Panc1 (cell line): ENCODE measurements at regions of chr6 and their contacts with region 1.

Region 1: DNA sequence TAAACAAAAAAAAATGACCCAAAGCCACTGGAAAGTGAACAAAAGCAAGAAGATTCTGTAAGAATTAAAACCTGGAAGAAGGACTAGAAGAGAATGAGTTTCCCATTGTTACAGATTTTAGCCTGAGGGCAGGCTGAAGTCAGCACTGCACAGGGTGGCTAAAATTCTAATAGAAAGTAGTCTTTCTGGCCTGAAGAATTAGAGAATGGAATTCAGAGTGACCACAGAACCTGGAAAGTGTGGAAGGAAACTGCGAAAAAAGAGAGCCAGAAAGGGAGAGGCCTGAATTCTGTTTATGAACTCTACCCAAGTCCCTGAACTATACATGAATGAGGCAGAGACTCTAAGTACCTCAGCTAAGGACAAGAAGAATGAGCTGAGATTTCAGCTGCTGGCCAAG is 38.9 kb upstream of the FILIP1 start:
- DNase-seq: no peak
- ATAC-seq: no peak
- H3K4me3 ChIP-seq: no peak overlapping the region
- H3K27ac ChIP-seq: no peak overlapping the region
- H3K4me1 ChIP-seq: 0 out of 2 replicates have a peak, but pooled peaks cover 2% of the 10 kb centered on the region
- H3K27me3 ChIP-seq: no peaks in the 10 kb centered on the region; the same call in 1 of the 2 replicates
- CTCF ChIP-seq: no peak

Region 2: DNA sequence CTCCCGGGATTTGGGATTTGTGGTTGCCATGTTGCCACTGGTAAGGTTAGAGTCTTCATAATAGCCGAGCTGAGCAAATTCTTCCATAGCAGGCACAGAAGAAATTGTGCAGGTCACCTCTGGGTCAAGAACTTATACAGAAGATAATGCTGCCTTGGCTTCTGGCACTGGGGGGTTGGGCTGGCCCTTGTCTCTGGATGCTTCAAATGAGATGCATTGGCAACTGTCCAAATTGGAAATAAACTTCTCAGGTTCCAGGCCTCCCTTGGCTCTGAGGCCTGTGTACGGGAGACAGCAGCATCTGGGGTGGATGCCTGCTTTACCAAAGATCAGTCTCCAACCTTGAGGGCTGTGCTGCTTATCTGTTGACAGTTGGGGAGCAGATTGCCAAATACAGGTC is 242.7 kb after region 1 on chr6:
- CTCF ChIA-PET with region 1: no interaction called
- POLR2A ChIA-PET with region 1: interaction called, 13 read pairs
- in situ Hi-C with region 1: no loop called
- intact Hi-C with region 1: no loop called
- DNase-seq: no peak
- ATAC-seq: no peak
- H3K4me3 ChIP-seq: no peak overlapping the region
- H3K27ac ChIP-seq: no peak overlapping the region
- H3K4me1 ChIP-seq: no peaks in the 10 kb centered on the region
- H3K27me3 ChIP-seq: no peaks in the 10 kb centered on the region
- CTCF ChIP-seq: no peak